ENCODE measurements at regions of chr4 and their contacts with region 1.

Region 1: GRCh38 chr4:42673082-42673425 is 16.1 kb upstream of the ATP8A1 start:
- DNase-seq: peak; percentile 43
- H3K4me3 Mint-ChIP-seq: peak overlapping the region; percentile 20
- H3K27ac Mint-ChIP-seq: peak overlapping the region; percentile 84
- H3K4me1 Mint-ChIP-seq: peaks cover 35% of the 10 kb centered on the region
- H3K27me3 Mint-ChIP-seq: no peaks in the 10 kb centered on the region

Region 2: GRCh38 chr4:42579903-42580302 is 93.2 kb before region 1 on chr4:
- CTCF ChIA-PET with region 1: no interaction called
- POLR2A ChIA-PET with region 1: interaction called, 3 read pairs
- intact Hi-C with region 1: loop called (anchors 1 kb)
- DNase-seq: no peak
- H3K4me3 Mint-ChIP-seq: no peak overlapping the region
- H3K27ac Mint-ChIP-seq: peak overlapping the region; percentile 28
- H3K4me1 Mint-ChIP-seq: peaks cover 11% of the 10 kb centered on the region
- H3K27me3 Mint-ChIP-seq: no peaks in the 10 kb centered on the region

Region 3: DNA sequence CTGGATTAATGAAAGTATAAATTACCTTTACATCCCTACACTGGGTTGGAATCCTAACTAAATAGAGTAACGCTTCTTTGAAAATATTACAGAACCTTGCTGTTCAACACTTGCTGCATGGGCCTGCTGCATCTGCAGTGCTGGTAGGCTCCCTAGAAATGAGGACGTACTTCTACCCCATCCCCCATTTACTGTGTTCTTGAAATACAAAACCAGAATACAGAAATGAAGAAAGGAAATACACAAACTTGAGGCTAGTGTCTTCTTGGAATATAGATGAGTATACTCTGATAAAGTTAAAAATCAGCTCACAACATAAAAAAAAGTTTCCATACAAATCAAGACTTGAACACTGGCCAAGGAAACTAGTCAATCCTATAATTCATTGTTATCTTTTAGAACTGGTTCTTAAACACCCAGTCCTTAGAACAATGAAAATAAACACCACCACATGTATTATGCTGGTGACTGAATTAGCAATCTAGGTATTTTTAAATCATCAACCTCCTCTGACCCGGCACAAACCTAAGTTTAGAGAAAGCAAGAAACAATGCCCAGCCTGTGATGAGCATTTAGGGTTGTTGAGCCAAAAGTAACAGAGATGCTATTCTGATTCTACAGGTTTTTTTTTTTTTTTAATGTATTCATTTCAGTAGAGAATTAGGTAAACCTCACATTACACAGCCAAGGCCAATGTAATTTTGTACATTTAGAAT is 65.9 kb before region 1 on chr4:
- CTCF ChIA-PET with region 1: no interaction called
- POLR2A ChIA-PET with region 1: no interaction called
- intact Hi-C with region 1: loop called (anchors 2 kb)
- DNase-seq: no peak
- H3K4me3 Mint-ChIP-seq: no peak overlapping the region
- H3K27ac Mint-ChIP-seq: peak overlapping the region; percentile 20
- H3K4me1 Mint-ChIP-seq: peaks cover 19% of the 10 kb centered on the region
- H3K27me3 Mint-ChIP-seq: no peaks in the 10 kb centered on the region

Region 4: DNA sequence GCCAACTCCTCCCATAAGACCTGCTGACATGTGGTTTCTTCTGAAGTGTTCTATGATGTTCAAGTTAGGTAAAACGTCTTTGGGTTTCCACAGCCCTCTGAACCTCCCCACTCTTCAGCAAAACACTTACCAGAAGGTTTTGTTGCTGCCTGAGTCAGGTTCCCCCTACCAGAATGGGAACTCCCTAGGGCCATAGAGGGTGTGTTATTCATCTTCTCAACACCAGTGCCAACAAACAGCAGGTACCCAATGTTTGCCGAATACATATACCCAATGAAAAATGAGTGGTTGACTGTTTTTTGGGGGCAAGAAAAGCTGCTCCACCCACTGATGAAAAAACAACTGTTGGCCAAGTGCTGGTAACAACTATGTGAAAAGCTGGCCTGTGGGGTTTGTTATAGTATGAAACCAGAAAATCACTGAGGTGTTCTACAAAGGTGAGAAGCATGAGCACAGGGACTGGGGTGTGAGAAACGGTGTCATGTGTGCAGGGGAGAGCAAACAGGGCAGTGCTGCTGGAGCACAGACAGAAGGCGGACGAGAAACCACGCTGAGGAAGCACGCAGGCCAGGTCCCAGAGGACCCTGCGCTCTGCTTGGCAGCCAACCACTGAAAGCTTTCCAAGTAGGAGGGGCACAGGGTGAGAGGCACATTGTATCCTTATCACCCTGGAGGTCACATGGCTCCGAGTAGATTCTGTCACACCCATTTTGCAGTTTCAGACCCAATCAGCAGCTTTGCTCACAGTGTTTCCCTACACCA is 45.0 kb before region 1 on chr4:
- CTCF ChIA-PET with region 1: no interaction called
- POLR2A ChIA-PET with region 1: interaction called, 4 read pairs
- intact Hi-C with region 1: loop called (anchors 1 kb)
- DNase-seq: peak; percentile 49
- H3K4me3 Mint-ChIP-seq: peak overlapping the region; percentile 36
- H3K27ac Mint-ChIP-seq: peak overlapping the region; percentile 83
- H3K4me1 Mint-ChIP-seq: peaks cover 46% of the 10 kb centered on the region
- H3K27me3 Mint-ChIP-seq: no peaks in the 10 kb centered on the region

Region 5: GRCh38 chr4:42638993-42639392 is 34.1 kb before region 1 on chr4:
- CTCF ChIA-PET with region 1: no interaction called
- POLR2A ChIA-PET with region 1: no interaction called
- intact Hi-C with region 1: loop called (anchors 2 kb)
- DNase-seq: peak; percentile 47
- H3K4me3 Mint-ChIP-seq: no peak overlapping the region
- H3K27ac Mint-ChIP-seq: no peak overlapping the region
- H3K4me1 Mint-ChIP-seq: peaks cover 65% of the 10 kb centered on the region
- H3K27me3 Mint-ChIP-seq: no peaks in the 10 kb centered on the region

Region 6: DNA sequence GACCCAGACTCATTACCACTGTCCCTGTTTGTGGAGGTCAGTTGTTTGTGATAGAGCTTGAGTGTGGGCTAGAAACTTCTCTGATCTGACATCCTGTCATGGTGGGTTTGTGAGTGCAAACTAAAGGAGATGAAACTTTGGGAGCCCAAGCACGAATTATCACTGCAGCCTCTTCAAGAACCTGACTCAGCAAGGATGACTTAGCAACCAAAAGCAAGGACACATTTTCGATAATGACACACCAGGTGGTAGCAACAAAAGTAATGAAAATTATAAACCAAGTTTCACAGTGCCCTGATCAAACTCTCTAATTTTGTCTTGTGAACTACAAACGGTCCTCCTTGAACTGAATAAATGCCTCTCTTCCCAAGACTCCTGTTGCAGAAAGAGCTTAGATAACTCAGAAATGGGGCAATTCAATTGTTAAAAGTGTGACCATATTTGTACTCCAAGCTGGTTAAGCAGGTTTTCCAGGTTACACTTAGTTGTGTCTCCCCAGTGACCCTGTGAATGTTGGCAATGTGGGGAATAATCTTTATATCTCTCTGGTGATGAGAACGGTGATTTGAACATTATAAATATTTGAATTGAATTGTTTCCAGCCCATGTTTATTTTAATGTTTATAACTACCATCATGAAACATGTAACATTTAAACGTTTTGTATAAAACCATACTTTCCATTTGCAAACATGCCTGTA is 36.5 kb after region 1 on chr4:
- CTCF ChIA-PET with region 1: no interaction called
- POLR2A ChIA-PET with region 1: no interaction called
- intact Hi-C with region 1: no loop called
- DNase-seq: no peak
- H3K4me3 Mint-ChIP-seq: no peak overlapping the region
- H3K27ac Mint-ChIP-seq: no peak overlapping the region
- H3K4me1 Mint-ChIP-seq: no peaks in the 10 kb centered on the region
- H3K27me3 Mint-ChIP-seq: peaks cover 14% of the 10 kb centered on the region

Region 7: DNA sequence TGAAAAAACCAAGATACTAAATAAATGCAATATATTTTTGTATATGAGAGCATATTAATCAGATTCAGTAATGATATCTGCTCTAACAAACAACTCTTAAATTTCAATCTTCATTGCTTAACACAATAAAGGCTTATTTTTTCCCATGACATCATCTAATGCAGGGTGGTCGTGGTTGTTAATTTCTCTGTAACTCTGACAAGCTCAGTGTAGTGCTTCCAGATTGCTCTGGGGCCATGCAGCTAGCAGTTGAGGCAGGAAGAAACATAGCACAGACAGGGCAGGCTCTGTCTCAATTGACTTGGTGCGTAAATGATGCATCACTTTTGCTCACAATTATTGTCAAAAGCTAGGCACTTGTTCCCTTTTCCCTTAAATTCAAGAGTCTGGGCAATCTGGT is 218.6 kb after region 1 on chr4:
- CTCF ChIA-PET with region 1: no interaction called
- POLR2A ChIA-PET with region 1: no interaction called
- intact Hi-C with region 1: no loop called
- DNase-seq: no peak
- H3K4me3 Mint-ChIP-seq: no peak overlapping the region
- H3K27ac Mint-ChIP-seq: no peak overlapping the region
- H3K4me1 Mint-ChIP-seq: no peaks in the 10 kb centered on the region
- H3K27me3 Mint-ChIP-seq: peaks cover 10% of the 10 kb centered on the region

Region 8: DNA sequence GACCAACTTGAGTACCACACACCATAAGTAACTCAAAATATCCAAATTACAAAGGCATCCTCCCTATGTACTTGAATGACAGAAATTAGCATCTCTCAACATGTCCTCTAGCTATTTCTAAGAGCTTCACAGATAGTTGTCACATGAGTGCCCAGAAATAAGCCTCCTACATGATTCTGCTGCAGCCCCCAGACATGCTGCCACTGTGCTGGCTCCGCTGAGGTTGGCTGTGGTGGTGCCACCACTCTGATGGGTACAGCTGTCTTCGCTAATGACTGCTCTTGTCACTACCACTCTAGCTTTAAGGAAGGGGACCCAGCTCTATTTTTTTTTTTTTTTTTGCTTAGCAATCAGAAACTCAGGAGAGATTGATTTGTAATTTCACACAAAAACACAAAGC is 475.4 kb after region 1 on chr4:
- CTCF ChIA-PET with region 1: no interaction called
- POLR2A ChIA-PET with region 1: no interaction called
- intact Hi-C with region 1: no loop called
- DNase-seq: no peak
- H3K4me3 Mint-ChIP-seq: no peak overlapping the region
- H3K27ac Mint-ChIP-seq: no peak overlapping the region
- H3K4me1 Mint-ChIP-seq: no peaks in the 10 kb centered on the region
- H3K27me3 Mint-ChIP-seq: no peaks in the 10 kb centered on the region